Ascending aorta (tissue), 2 donors: ENCODE measurements at regions of chr7 and their contacts with region 1.

Region 1: GRCh38 chr7:7103343-7104313 is 78.7 kb upstream of the C1GALT1 start:
- DNase-seq: no peak
- H3K4me3 ChIP-seq: peak overlapping the region; percentile 20 to 24
- H3K27ac ChIP-seq: no peak overlapping the region
- H3K4me1 ChIP-seq: no peaks in the 10 kb centered on the region
- H3K27me3 ChIP-seq: no peaks in the 10 kb centered on the region
- CTCF ChIP-seq: peak; percentile 38 to 56 (median 55)

Region 2: DNA sequence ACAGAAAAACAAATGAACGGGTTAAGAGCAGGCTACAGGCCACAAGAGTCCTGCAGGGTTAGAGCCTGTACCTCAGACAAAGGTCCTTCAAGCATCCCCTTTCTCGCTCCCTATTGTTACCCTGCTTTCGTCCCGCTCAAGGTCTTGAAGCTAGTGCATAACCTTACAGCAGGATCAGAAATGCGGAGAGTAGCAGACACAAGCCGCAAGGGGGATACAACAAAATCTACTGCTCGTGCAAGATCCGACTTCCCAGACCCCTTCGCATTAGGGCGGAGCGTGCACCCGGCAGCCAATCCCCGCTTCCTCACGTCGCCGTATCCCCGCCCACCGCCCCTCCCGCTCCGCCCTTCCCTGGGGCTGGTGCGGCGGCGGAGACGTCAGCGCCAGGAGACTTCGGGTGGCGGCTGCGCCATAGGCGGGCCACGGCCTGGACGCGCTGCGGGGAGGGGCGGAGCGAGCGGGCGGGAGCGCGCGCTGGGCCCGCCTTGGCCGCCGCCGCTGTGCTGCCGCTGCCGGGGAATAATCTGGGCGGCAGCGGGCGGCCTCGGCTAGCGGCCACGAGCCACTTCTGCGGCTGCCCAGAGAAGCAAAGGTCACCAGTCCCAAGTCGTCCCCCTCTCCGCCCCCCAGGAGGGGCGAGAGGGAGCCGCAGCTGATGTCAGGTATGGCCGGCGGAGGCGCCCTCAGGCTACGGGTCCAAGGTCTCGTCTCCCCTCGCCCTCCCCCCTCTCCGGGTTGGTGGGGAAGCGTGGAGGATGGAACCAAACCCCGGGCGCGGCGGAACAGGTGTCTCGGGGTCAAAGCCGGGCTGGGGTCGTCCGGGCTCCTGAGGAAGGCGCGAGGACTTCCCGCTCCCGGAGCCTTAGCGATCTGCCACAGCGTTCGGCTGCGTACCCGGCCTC is 78.8 kb after region 1 on chr7 and contains the start of gene C1GALT1:
- intact Hi-C with region 1: loop called (anchors 5 kb)
- DNase-seq: peak; percentile 90 to 98
- H3K4me3 ChIP-seq: peak within 1 kb of the TSS; percentile 87 to 93
- H3K27ac ChIP-seq: peak within 1 kb of the TSS; percentile 89 to 94
- H3K4me1 ChIP-seq: peaks cover 0 to 7% of the 10 kb centered on the region in 2 donors
- H3K27me3 ChIP-seq: no peaks in the 10 kb centered on the region
- CTCF ChIP-seq: peak in 2 of 3 experiments; percentile 26 to 44
- total RNA-seq, gene C1GALT1: 11.0 TPM

Region 3: GRCh38 chr7:7535691-7536090 is 432.1 kb after region 1 on chr7 and contains the start of gene COL28A1:
- intact Hi-C with region 1: loop called (anchors 2 kb)
- DNase-seq: no peak
- H3K4me3 ChIP-seq: no peak within 1 kb of the TSS
- H3K27ac ChIP-seq: no peak within 1 kb of the TSS
- H3K4me1 ChIP-seq: no peaks in the 10 kb centered on the region
- H3K27me3 ChIP-seq: no peaks in the 10 kb centered on the region
- CTCF ChIP-seq: no peak
- total RNA-seq, gene COL28A1: 0.11 TPM

Region 4: DNA sequence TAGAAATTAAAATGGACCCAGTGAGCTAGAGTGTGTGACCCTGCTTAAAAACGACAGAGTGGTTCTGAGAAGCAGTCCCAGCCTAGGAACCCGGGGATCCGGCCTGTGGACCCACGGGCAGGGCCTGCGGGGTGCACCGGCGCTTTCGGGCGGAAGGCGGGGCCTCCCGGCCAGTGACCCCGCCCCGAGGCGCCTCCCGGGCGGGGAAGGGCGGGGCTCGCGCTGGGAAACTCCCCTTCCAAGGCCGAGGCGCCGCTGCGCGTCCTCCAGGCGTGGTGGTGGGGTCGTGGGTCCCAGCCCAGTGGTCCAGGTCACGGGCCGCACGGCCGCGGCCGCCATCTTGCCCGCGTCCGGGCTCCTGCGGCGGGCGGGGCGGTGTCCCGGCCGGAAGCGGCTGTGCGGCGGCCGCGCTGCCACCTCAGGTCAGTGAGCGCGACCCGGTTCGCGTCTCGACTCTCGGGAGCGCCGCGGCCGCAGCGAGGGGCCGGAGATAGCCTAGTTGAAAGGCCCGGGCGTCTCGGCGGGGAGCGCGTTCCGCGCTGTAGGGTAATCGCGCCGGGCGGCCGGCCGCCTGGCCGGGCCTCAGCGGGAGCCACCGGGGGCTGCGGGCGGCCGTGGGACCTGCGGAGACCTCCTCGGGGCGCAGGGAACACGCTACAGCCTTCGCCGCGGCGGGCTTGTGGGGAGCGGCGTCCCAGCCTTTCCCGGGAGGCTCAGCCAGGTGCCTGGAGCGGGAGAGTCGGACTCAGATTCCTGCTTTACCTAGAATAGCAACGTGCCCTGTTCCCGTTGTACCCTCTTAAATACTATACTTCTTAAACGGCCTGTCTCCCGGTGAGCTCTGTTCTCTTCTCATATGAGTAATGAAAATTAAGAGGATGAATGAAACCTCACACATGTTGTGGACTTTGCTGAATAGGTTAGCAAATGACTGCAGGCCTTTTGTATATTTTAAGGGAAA is 463.3 kb after region 1 on chr7 and contains the start of gene MIOS:
- intact Hi-C with region 1: loop called (anchors 10 kb)
- DNase-seq: peak; percentile 10 to 90
- H3K4me3 ChIP-seq: peak within 1 kb of the TSS; percentile 85 to 93
- H3K27ac ChIP-seq: peak within 1 kb of the TSS; percentile 94 to 95
- H3K4me1 ChIP-seq: peaks cover 5 to 12% of the 10 kb centered on the region in 2 donors
- H3K27me3 ChIP-seq: no peaks in the 10 kb centered on the region
- CTCF ChIP-seq: no peak
- total RNA-seq, gene MIOS: 14.6 TPM